HEK293T (cell line): ENCODE measurements at regions of chr6 and their contacts with region 1.

Region 1: GRCh38 chr6:27825025-27825793 is 87.0 kb downstream of the OR2B2 start:
- DNase-seq: no peak

Region 2: DNA sequence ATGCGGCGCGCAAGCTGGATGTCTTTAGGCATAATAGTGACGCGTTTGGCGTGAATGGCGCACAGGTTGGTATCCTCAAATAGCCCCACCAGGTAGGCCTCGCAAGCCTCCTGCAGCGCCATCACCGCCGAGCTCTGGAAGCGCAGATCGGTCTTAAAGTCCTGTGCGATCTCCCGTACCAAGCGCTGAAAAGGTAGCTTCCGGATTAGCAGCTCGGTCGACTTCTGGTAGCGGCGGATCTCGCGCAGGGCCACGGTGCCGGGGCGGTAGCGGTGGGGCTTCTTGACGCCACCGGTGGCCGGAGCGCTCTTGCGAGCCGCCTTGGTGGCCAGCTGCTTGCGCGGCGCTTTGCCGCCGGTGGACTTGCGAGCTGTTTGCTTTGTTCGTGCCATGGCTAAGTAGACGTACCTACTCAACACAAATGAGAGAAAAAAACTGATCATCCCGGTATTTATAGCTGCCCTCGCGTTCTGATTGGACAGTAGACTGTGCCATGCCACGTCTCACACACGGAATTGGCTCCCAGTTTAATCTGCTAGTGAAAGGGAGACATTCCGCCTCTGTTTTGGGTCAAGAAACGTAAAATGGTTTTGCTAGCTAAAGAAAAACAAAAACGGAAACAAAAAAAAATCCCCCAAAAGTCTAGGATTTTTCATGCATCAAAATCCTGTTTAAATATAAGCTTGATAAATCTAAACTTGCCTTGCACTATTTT is 46.9 kb after region 1 on chr6:
- CTCF ChIA-PET with region 1: no interaction called
- POLR2A ChIA-PET with region 1: interaction called, 13 read pairs
- DNase-seq: no peak